Right ventricle myocardium inferior (tissue), 1 donor: ENCODE measurements at regions of chr5 and their contacts with region 1.

Region 1: DNA sequence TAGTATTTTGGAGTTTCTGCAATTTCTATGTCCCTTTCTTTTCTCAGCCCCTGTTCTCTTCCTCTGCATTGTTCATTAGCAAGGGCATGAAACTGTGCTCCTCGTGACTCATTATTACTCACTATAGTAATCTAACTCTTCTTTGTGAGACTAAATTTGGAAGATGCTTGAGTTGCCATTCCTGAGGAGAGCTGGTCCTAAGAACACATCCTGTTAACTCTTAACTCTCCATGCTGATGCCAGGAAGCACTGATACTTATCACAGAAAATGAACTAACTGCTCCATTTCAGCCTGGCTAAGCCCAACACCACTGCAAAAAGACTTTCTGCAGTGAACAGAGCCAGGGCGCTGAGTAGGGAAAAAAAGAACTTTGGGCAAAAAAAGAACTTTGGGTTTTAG is 10.6 kb upstream of the CSNK1A1 start:
- DNase-seq: no peak
- ATAC-seq: peak; percentile 88

Region 2: GRCh38 chr5:148922606-148923005 is 639.2 kb before region 1 on chr5:
- intact Hi-C with region 1: no loop called
- DNase-seq: no peak
- ATAC-seq: no peak

Region 3: DNA sequence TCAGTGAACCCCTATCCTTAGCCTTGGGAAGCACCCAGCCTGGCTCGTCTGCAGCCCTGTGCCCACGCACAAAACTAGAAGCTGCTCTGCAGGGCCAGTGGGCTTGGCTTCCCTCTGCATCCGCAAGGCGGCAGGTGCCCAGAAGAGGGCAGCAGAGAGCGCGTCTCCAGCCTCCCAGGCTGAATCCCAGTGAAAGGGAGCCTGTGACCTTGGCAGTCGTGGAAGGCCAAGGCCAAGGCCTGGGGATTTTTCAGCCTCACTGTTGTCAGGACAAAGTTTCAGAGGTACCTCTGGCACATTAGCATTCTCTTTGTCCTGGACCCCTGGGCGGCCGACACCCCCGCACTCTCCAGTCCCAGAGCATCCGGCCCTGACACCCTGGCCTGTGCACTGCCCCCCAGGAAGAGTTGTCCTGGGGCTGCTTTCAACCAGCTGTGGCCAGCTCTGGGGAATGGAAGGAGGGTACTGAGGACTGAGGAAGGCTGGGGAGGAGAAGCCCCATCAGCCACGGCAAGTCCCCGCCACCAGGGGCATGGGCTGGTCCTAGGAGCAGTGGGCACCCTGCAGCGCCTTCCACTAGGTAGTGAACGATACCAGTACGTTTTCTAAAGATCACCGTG is 119.2 kb before region 1 on chr5:
- intact Hi-C with region 1: loop called (anchors 2 kb)
- DNase-seq: peak; percentile 90
- ATAC-seq: peak; percentile 83